Endothelial cell of umbilical vein (primary cell): ENCODE measurements at regions of chr4 and their contacts with region 1.

Region 1: DNA sequence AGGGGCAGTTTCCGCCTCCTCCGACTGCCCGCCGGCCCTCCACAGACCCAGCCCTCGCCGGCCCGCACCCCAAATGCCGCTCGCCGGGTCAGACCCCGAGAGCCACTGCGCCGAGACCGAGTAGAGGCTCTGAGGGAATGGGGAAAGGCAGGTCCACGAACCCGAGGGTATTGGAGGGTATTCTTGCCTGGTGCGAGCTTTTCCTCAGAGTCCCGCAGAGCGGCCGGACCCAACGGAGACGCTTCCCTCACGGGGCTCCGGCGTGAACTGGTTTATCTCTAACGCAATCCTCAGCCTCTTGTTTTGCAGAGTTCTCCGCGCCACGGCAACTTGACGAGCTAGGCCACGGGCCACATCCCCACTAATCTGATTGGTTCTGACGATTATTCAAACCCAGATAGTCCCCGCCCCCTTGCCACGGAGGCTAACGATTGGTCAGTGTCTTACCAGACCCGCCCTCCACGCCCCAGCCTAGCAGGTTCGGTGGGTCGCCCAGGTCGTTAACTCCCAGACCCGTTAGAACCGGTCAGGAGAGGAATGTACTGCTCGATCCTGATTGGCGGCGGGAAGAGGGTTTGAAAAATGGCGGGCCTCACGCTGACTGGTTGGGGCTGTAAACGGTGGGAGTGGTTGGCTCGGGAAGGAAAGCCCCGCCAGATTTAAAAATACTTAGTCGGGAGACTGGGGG is at the start of gene HMGB2:
- DNase-seq: peak; percentile 100
- H3K4me3 ChIP-seq: peak within 1 kb of the TSS; percentile 81 to 98 (median 91)
- H3K27ac ChIP-seq: peak within 1 kb of the TSS; percentile 88
- H3K4me1 ChIP-seq: peaks cover 24% of the 10 kb centered on the region
- H3K27me3 ChIP-seq: no peaks in the 10 kb centered on the region
- CTCF ChIP-seq: no peak
- POLR2A ChIP-seq: peak; percentile 92
- total RNA-seq, gene HMGB2: 217 and 233 TPM in 2 replicates

Region 2: GRCh38 chr4:173057901-173058300 is 276.3 kb before region 1 on chr4:
- CTCF ChIA-PET with region 1: no interaction called
- POLR2A ChIA-PET with region 1: no interaction called
- dilution Hi-C with region 1: no loop called
- intact Hi-C with region 1: no loop called
- DNase-seq: peak; percentile 74
- H3K4me3 ChIP-seq: no peak overlapping the region
- H3K27ac ChIP-seq: peak overlapping the region; percentile 74
- H3K4me1 ChIP-seq: peaks cover 28% of the 10 kb centered on the region
- H3K27me3 ChIP-seq: no peaks in the 10 kb centered on the region
- CTCF ChIP-seq: no peak
- POLR2A ChIP-seq: no peak

Region 3: DNA sequence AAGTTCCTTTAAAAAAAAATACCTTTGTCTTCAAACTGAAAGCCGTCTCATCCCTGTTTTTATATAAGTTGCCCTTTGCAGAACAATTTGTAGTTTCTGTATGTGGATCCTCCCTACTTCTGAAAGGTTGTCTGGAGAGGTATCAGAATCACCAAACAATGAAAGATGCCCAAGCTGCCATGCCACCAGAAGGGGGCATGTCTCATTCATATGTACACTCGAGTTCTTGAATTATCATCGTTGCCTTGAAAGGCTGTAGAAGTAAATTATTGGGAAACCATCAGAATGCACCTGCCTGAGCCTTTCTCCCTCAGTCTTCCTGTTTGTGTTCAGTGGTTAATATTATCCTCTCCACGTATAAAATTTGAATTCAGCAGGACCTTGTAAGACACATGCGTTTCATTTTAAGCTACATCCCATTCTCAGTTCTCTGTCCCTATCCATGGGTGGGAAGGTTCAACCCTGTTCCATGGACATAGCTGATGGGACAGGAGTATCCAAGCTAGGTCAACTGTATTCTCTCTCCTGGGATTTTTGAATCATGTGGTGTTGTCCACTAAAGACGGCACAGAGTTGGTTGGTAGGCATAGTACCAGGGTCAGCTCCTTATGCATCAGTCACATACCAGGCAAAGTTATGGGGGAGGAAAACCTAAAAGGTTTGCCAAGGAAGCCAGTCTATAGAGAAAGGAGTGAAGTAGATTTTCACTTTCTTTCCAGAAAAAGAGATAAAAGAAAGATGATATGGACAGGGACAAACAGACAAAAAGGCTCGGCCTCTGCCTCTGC is 141.7 kb before region 1 on chr4:
- CTCF ChIA-PET with region 1: no interaction called
- POLR2A ChIA-PET with region 1: no interaction called
- dilution Hi-C with region 1: no loop called
- intact Hi-C with region 1: loop called (anchors 5 kb)
- DNase-seq: peak; percentile 38
- H3K4me3 ChIP-seq: no peak overlapping the region
- H3K27ac ChIP-seq: no peak overlapping the region
- H3K4me1 ChIP-seq: peaks cover 19% of the 10 kb centered on the region
- H3K27me3 ChIP-seq: no peaks in the 10 kb centered on the region
- CTCF ChIP-seq: peak in 1 of 2 donors; percentile 26
- POLR2A ChIP-seq: no peak

Region 4: GRCh38 chr4:173370477-173371291 is 36.5 kb after region 1 on chr4 and contains the start of gene SAP30:
- CTCF ChIA-PET with region 1: interaction called, 15 read pairs
- POLR2A ChIA-PET with region 1: interaction called, 127 read pairs
- dilution Hi-C with region 1: no loop called
- intact Hi-C with region 1: loop called (anchors 1 kb)
- DNase-seq: peak; percentile 99
- H3K4me3 ChIP-seq: peak within 1 kb of the TSS; percentile 87 to 99 (median 91)
- H3K27ac ChIP-seq: peak within 1 kb of the TSS; percentile 93
- H3K4me1 ChIP-seq: peaks cover 24% of the 10 kb centered on the region
- H3K27me3 ChIP-seq: no peaks in the 10 kb centered on the region
- CTCF ChIP-seq: no peak
- POLR2A ChIP-seq: peak; percentile 95
- total RNA-seq, gene SAP30: 23.8 and 27.1 TPM in 2 replicates

Region 5: DNA sequence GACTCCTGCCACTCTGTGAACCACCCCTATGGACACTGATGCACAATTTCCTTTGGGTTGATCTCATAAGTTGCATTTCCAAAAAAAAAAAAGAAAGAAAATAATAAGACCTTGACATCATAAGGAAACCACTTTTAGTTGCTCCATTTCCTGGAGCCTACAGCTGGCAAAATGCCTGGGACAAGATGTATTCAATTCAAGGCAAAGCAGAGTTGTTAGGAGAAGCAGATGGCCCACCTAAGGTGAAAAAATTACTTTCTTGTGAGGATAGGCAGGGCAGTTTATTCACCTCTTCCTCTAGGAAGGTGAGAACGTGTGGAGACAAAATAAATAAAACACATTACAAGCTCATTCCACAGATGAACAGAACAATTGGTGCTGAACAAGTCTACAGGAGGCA is 78.8 kb after region 1 on chr4:
- CTCF ChIA-PET with region 1: interaction called, 70 read pairs
- POLR2A ChIA-PET with region 1: interaction called, 8 read pairs
- dilution Hi-C with region 1: no loop called
- intact Hi-C with region 1: loop called (anchors 1 kb)
- DNase-seq: peak; percentile 68
- H3K4me3 ChIP-seq: no peak overlapping the region
- H3K27ac ChIP-seq: no peak overlapping the region
- H3K4me1 ChIP-seq: peaks cover 24% of the 10 kb centered on the region
- H3K27me3 ChIP-seq: no peaks in the 10 kb centered on the region
- CTCF ChIP-seq: no peak
- POLR2A ChIP-seq: no peak

Region 6: DNA sequence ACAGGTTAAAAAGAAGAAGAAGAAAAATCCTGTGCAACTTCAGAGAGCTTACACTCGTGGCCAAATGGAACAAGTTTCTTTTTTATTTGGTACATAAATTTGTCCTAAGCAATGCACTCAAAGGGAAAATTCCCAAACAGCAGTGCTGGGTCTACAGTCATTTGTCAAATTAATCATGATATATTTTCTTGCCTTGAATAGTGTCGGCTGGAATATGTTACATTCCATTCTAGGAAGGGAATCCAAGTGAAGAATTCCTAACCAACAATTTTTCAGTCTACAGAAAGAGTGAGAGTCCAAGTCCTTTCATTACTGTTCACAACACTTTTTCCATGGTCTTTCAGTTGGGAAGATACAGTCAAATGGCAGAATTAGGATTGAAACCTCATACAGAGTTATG is 131.9 kb after region 1 on chr4:
- CTCF ChIA-PET with region 1: no interaction called
- POLR2A ChIA-PET with region 1: no interaction called
- dilution Hi-C with region 1: no loop called
- intact Hi-C with region 1: no loop called
- DNase-seq: no peak
- H3K4me3 ChIP-seq: no peak overlapping the region
- H3K27ac ChIP-seq: no peak overlapping the region
- H3K4me1 ChIP-seq: no peaks in the 10 kb centered on the region
- H3K27me3 ChIP-seq: no peaks in the 10 kb centered on the region
- CTCF ChIP-seq: no peak
- POLR2A ChIP-seq: no peak

Region 7: GRCh38 chr4:173494013-173494970 is 160.1 kb after region 1 on chr4:
- CTCF ChIA-PET with region 1: no interaction called
- POLR2A ChIA-PET with region 1: no interaction called
- dilution Hi-C with region 1: no loop called
- intact Hi-C with region 1: loop called (anchors 5 kb)
- DNase-seq: peak; percentile 53
- H3K4me3 ChIP-seq: peak overlapping the region; percentile 18 to 51 (median 24)
- H3K27ac ChIP-seq: no peak overlapping the region
- H3K4me1 ChIP-seq: peaks cover 14% of the 10 kb centered on the region
- H3K27me3 ChIP-seq: peaks cover 22 to 30% of the 10 kb centered on the region in 2 experiments
- CTCF ChIP-seq: peak; percentile 58 to 77
- POLR2A ChIP-seq: no peak

Region 8: DNA sequence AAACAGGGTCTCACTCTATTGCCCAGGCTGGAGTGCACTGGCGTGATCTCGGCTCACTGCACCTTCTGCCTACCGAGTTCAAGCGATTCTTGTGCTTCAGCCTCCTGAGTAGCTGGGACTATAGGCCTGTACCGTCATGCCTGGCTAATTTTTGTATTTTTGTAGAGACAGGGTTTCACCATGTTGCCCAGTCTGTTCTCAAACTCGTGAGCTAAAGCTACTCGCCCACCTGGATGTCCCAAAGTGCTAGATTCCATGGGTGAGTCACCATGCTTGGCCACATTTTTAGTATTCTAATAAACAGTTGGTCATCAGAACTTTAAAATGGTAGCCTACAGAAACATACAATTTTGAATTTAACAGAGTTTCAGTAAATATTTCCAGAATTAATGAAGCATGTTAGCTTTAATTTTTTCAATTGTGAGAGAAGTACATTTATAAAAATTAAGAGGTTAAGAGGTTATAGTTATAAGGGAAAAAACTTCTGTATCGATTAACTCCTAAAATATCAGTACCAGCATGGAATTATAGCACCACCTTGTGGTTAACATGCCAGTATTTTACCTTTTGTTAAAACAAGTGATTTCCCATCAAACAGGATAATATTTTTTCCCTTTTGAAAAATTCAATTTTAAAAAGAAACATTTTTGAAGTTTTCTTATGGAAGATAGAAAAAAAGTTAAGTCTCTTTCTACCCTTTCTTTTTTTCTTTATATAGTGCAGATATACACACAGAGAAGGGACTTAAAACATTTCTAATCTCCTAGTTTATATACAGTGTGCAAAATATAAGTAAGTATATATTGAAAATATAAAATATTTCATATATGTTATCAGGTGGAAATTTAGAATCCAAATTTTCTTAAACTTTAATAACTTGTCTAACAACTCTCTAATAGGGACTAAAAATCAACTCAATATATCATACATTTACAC is 984.9 kb after region 1 on chr4:
- CTCF ChIA-PET with region 1: no interaction called
- POLR2A ChIA-PET with region 1: no interaction called
- dilution Hi-C with region 1: no loop called
- intact Hi-C with region 1: loop called (anchors 10 kb)
- DNase-seq: peak; percentile 45
- H3K4me3 ChIP-seq: no peak overlapping the region
- H3K27ac ChIP-seq: no peak overlapping the region
- H3K4me1 ChIP-seq: peaks cover 3% of the 10 kb centered on the region
- H3K27me3 ChIP-seq: no peaks in the 10 kb centered on the region
- CTCF ChIP-seq: peak; percentile 21 to 25
- POLR2A ChIP-seq: no peak